ENCODE measurements at regions of chr11 and their contacts with region 1.

Region 1: GRCh38 chr11:406978-407739 is 7.6 kb downstream of the SIGIRR start:
- DNase-seq: peak; percentile 93
- H3K4me3 Mint-ChIP-seq: peak overlapping the region; percentile 32
- H3K27ac Mint-ChIP-seq: no peak overlapping the region
- H3K4me1 Mint-ChIP-seq: peaks cover 12% of the 10 kb centered on the region
- H3K27me3 Mint-ChIP-seq: no peaks in the 10 kb centered on the region

Region 2: DNA sequence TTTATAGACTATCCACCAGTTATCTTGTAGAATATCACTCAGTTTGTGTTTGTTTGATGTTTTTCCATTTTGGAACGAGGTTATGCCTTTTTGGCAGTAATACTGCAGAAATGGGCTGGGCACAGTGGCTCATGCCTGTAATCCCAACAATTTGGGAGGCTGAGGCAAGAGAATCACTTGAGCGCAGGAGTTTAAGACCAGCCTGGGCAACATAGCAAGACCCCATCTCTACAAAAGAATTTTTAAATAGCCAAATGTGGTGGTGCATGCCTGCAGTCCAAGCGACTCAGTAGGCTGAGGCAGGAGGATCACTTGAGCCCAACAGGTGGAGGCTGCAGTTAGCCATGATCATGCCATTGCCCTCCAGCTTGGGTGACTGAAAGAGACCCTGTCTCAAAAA is 60.6 kb before region 1 on chr11:
- CTCF ChIA-PET with region 1: no interaction called
- POLR2A ChIA-PET with region 1: no interaction called
- DNase-seq: no peak
- H3K4me3 Mint-ChIP-seq: no peak overlapping the region
- H3K27ac Mint-ChIP-seq: no peak overlapping the region
- H3K4me1 Mint-ChIP-seq: peaks cover 21% of the 10 kb centered on the region
- H3K27me3 Mint-ChIP-seq: peaks cover 14% of the 10 kb centered on the region

Region 3: DNA sequence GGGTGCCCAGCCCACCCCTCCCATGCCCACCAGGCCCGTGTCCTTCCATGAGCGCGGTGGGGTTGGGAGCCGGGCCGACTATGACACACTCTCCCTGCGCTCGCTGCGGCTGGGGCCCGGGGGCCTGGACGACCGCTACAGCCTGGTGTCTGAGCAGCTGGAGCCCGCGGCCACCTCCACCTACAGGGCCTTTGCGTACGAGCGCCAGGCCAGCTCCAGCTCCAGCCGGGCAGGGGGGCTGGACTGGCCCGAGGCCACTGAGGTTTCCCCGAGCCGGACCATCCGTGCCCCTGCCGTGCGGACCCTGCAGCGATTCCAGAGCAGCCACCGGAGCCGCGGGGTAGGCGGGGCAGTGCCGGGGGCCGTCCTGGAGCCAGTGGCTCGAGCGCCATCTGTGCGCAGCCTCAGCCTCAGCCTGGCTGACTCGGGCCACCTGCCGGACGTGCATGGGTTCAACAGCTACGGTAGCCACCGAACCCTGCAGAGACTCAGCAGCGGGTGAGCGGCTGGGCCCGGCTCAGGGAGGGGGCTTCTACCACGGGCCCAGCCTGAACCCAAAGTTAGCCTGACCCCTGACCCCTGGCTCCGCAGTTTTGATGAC is 10.1 kb before region 1 on chr11:
- CTCF ChIA-PET with region 1: interaction called, 11 read pairs
- POLR2A ChIA-PET with region 1: interaction called, 7 read pairs
- DNase-seq: peak; percentile 60
- H3K4me3 Mint-ChIP-seq: no peak overlapping the region
- H3K27ac Mint-ChIP-seq: no peak overlapping the region
- H3K4me1 Mint-ChIP-seq: peaks cover 4% of the 10 kb centered on the region
- H3K27me3 Mint-ChIP-seq: no peaks in the 10 kb centered on the region